ENCODE measurements at regions of chr4 and their contacts with region 1.

Region 1: DNA sequence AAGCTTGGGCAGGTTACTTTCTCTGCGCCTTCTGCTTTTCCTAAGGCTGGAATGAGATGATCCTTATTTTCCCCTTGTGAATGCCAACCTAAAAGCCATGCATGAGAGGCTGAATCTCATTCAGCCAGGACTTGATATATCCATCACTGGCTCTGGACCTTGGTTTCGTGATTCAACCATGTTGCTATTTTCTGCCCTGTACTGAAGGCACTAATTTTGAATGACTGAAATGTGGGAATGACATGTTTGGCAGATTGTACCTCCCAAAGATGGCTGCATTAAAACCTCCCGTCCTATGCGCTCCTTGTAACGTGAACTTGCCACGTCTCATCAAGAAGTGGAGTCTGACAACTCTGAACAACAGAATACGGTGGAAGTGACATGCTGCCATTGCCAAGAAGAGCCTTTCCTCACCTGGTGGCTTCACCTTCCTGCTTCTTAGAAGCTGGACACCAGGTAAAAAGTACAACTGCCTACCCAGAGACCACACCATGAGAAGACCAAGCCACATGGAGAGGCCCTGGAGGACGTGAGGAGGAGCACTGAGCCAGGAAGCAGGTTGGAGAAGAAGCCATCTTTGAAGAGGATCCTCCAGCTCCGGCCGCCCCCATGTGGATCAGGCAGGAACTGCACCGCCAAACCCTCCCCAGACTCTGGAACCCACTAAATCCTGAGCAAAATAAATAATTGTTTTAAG is 174.5 kb downstream of the NSUN7 start:
- DNase-seq: peak; percentile 92
- H3K4me3 Mint-ChIP-seq: no peak overlapping the region
- H3K27ac Mint-ChIP-seq: peak overlapping the region; percentile 72
- H3K4me1 Mint-ChIP-seq: peaks cover 10% of the 10 kb centered on the region
- H3K27me3 Mint-ChIP-seq: peaks cover 11% of the 10 kb centered on the region

Region 2: GRCh38 chr4:40736910-40737309 is 187.3 kb before region 1 on chr4:
- CTCF ChIA-PET with region 1: interaction called, 15 read pairs
- intact Hi-C with region 1: loop called (anchors 1 kb)
- DNase-seq: peak; percentile 18
- H3K4me3 Mint-ChIP-seq: no peak overlapping the region
- H3K27ac Mint-ChIP-seq: no peak overlapping the region
- H3K4me1 Mint-ChIP-seq: peaks cover 9% of the 10 kb centered on the region
- H3K27me3 Mint-ChIP-seq: peaks cover 2% of the 10 kb centered on the region

Region 3: DNA sequence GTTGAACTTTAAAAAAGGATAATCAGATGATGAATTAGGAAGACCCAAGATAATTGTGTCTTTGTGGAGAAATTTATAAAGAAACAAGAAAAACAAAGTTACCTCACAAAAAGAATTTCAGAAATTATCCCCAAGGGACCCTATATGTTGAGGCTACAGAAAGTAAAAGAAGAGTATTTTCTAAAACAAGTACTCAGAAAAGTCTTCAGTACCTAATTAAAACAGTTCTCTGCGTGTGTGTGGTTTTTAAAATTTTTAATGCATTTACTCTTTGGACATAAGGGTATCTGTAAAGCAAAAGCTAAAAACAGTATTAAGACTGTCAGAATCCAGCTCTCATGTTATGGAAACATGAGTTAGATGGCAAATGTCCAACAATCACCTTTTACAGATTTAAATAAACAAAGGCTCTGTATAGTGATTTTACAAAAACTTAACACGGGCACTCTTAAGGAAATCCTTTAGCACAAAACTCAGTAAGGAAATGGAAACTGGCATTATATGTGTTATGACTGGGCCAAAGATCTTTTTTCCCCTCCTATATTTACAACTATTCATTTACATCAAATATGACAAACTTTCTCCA is 13.0 kb after region 1 on chr4:
- CTCF ChIA-PET with region 1: interaction called, 13 read pairs
- intact Hi-C with region 1: no loop called
- DNase-seq: no peak
- H3K4me3 Mint-ChIP-seq: no peak overlapping the region
- H3K27ac Mint-ChIP-seq: no peak overlapping the region
- H3K4me1 Mint-ChIP-seq: no peaks in the 10 kb centered on the region
- H3K27me3 Mint-ChIP-seq: no peaks in the 10 kb centered on the region

Region 4: DNA sequence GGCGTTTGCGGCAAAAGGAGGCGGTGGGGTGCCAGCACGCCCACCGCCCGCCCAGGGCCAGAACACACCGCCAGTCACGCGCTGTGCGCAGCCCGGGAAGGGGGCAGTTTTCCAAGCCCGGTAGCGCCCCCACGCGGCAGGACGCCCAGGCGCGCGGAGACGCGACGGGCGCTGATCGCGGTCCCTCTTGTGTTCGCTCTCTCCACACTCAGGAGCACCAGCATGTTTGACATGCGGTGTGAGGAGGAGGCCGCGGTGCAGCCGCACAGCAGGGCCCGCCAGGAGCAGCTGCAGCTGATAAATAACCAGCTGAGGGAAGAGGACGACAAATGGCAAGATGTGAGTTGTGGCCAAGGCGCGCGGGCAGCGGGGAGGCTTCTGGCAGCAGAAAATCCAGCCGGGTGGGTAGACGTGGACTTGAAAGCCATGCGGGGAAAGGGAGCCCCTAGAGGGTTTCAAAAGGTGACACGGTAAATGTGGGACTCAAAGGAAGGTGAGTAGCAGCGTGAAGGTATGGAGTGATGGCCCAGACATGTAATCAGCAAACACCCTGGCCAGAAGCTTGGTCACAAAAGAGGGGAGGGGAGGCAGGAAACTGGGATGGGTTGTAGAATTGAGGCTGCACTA is 720.2 kb after region 1 on chr4:
- CTCF ChIA-PET with region 1: no interaction called
- intact Hi-C with region 1: loop called (anchors 5 kb)
- DNase-seq: peak; percentile 42
- H3K4me3 Mint-ChIP-seq: no peak overlapping the region
- H3K27ac Mint-ChIP-seq: no peak overlapping the region
- H3K4me1 Mint-ChIP-seq: no peaks in the 10 kb centered on the region
- H3K27me3 Mint-ChIP-seq: peaks cover 31% of the 10 kb centered on the region

Region 5: DNA sequence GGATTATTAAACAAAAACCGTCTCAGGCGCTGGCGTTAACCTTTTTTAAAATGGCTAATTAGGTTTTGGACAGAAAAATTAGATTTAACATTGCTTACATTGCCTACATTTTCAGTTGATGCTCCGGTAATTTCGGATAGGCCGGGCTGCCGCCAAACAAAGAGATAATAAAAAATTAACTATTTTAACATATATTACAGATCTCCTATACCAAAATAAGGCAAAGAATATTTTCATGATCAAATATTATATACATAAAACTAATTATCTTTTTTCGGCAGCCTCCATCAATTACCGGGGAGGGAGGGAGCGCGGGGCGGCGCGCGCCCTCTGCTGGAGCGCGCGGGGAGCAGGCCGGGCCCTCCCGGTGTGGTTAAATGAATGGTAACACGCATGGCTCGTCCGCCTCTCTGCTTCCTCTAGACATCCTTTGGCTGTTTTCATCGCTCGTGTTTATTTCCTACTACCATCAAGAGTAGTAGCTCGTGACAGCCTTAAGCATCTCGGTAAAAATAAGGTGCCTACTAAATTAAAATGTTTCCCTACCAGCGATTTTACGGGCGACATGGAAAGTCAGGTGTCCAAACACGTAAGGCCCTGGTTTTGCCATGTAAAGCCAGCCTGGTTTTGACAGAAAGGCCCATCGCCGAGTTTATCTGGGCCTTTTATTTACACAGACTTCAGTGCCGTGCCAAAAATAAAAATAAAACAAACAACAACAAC is 958.5 kb after region 1 on chr4:
- CTCF ChIA-PET with region 1: no interaction called
- intact Hi-C with region 1: loop called (anchors 10 kb)
- DNase-seq: peak; percentile 63
- H3K4me3 Mint-ChIP-seq: peak overlapping the region; percentile 39
- H3K27ac Mint-ChIP-seq: no peak overlapping the region
- H3K4me1 Mint-ChIP-seq: peaks cover 17% of the 10 kb centered on the region
- H3K27me3 Mint-ChIP-seq: peaks cover 44% of the 10 kb centered on the region

Measured in activated naive CD4-positive, alpha-beta T cell treated with anti-CD3 and anti-CD28 coated beads for 36 hours (primary cell).